GM10248 (cell line): ENCODE measurements at regions of chr7 and their contacts with region 1.

Region 1: DNA sequence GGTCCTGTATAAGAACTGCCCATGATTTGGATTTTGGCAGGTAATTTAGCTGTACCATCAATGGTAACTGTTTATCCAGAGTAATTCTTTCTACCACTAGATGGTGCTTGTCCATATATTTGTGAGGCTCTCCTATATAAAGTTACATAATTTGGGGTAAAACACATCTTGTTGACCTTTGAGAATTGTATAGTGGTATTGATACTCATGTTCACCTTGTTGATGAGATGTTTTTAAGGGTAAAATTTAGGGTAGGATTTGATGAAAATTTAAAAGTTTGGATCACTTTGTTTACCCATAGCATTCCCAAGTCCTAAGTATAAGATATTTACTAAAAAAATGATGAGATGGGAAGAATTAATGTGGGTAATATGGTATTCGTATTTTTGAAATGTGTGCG is 31.6 kb downstream of the ST7 start:
- DNase-seq: peak; percentile 32
- CTCF ChIP-seq: peak; percentile 53

Region 2: GRCh38 chr7:116752305-116753074 is 232.4 kb before region 1 on chr7:
- CTCF ChIA-PET with region 1: no interaction called
- POLR2A ChIA-PET with region 1: no interaction called
- DNase-seq: no peak
- CTCF ChIP-seq: no peak

Region 3: DNA sequence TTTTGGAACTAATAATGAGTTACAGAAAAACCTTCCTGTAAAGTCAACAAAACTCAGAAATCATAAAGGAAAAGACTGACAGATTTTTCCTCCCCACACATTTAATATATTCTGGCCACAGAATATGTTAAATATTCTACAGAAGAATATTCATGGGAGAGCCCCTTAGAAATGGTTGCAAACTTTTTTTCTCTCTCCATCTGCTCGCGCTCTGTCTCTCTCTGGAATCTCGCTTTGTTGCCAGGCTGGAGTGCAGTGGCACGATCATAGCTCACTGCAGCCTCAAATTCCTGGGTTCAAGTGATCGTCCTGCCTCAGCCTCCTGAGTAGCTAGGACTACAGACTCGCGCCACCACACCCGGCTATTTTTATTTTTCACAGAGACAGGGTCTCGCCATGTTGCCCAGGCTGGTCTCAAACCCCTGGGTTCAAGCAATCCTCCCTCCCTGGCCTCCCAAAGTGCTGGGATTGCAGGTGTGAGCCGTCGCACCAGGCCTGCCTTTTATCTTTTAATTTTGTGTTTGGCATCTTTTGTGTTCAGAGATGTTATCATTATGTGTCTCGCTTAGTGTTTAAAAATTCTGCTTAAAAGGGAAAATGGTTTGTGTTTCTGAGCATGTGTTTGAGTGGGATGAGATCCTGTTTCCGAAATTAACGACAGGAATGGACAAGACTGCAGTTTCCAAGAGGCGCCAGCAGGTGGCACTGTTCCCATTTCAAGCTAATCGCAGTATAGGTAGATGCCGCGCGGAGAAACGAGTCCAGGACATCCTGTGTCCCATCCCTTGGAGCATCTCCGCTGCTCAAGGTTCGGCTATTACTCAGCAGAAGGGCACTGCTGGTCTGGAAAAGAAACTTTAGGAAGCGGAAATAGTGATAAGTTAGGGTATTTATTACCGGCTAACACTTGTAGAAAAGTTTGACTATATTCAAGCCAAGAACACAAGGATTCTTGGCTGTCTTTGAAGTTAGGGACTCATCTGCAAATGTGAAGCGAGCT is 54.7 kb before region 1 on chr7:
- CTCF ChIA-PET with region 1: interaction called, 24 read pairs
- POLR2A ChIA-PET with region 1: no interaction called
- DNase-seq: peak; percentile 76
- CTCF ChIP-seq: peak; percentile 90

Region 4: DNA sequence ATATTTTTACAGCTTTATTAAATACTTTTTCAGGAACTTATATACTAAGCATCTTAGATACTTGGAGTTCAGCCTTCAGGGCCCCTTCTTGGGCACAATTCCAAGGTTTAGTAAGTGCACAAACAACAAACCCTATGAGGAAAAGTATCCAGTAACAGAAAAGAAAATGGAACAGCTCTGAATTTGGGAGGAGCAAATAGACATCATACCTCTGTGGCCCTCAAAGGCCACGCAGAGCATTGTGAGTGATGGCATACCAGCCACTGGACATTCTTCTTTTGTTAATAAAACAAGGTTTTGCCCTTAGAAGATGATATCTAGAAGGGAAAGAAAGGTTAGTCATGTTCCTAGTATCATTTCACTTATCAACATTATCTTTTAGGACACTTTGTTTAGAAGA is 14.4 kb after region 1 on chr7:
- CTCF ChIA-PET with region 1: interaction called, 126 read pairs
- POLR2A ChIA-PET with region 1: no interaction called
- DNase-seq: no peak
- CTCF ChIP-seq: no peak

Region 5: GRCh38 chr7:117014673-117015133 is 29.8 kb after region 1 on chr7:
- CTCF ChIA-PET with region 1: interaction called, 126 read pairs
- POLR2A ChIA-PET with region 1: no interaction called
- DNase-seq: peak; percentile 51
- CTCF ChIP-seq: no peak

Region 6: GRCh38 chr7:117127585-117128168 is 142.8 kb after region 1 on chr7:
- CTCF ChIA-PET with region 1: interaction called, 274 read pairs
- POLR2A ChIA-PET with region 1: no interaction called
- DNase-seq: no peak
- CTCF ChIP-seq: peak; percentile 70